Left lung (tissue), 14 donors: ENCODE measurements at regions of chr11 and their contacts with region 1.

Region 1: GRCh38 chr11:112280268-112281126 is 19.8 kb upstream of the PLET1 start:
- DNase-seq: peak in 3 of 4 donors; percentile 49 to 83 (median 70)
- ATAC-seq: peak; percentile 99
- H3K4me3 ChIP-seq: peak overlapping the region; percentile 45 to 48
- H3K27ac ChIP-seq: no peak overlapping the region
- H3K4me1 ChIP-seq: peaks cover 0 to 8% of the 10 kb centered on the region in 2 donors
- H3K27me3 ChIP-seq: no peaks in the 10 kb centered on the region
- CTCF ChIP-seq: peak; percentile 44 to 63

Region 2: GRCh38 chr11:112113539-112114457 is 166.7 kb before region 1 on chr11:
- intact Hi-C with region 1: loop called in 1 of 2 experiments (anchors 5 kb)
- DNase-seq: peak in 2 of 4 donors; percentile 22 to 54
- ATAC-seq: peak; percentile 94
- H3K4me3 ChIP-seq: no peak overlapping the region
- H3K27ac ChIP-seq: no peak overlapping the region
- H3K4me1 ChIP-seq: peaks cover 0 to 11% of the 10 kb centered on the region in 2 donors
- H3K27me3 ChIP-seq: no peaks in the 10 kb centered on the region
- CTCF ChIP-seq: peak; percentile 53 to 55

Region 3: DNA sequence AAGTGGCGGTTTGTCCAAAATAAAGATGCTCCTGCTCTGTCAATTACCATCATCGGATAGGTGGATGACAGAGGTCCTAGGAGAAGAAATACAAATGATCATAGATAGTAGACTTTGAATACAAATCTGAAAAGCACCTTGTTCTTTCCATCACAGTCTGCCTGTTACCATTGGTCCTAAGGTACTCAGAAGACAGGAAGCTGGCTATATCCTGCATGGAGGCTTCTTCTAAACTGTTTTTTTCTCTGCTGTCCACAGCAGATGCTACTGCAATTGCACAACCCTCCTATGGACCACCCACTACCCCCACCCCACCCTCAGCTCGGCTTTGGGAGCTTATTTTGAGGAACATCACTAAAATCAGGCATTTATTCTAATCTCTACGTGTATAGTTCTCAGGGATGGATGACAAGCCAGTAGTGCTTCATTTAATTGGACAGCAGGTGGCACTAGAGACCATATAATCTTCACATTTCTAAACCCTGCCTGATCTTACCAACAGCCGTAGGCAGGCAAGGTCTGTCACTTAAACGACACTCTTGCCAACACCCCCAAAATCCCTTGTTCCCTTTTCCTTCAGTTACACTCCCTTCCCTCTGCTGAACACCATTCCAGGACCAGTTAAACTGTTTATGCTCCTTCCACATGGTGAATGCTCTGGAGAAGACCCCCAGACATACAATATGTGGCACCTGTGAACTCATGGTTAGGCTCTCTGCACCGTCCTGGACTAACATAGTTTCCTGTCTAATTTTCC is 60.8 kb before region 1 on chr11:
- intact Hi-C with region 1: loop called (anchors 2 to 10 kb)
- DNase-seq: peak in 2 of 4 donors; percentile 75 to 84
- ATAC-seq: peak; percentile 98
- H3K4me3 ChIP-seq: no peak overlapping the region
- H3K27ac ChIP-seq: no peak overlapping the region
- H3K4me1 ChIP-seq: no peaks in the 10 kb centered on the region
- H3K27me3 ChIP-seq: no peaks in the 10 kb centered on the region
- CTCF ChIP-seq: peak; percentile 64 to 80

Region 4: DNA sequence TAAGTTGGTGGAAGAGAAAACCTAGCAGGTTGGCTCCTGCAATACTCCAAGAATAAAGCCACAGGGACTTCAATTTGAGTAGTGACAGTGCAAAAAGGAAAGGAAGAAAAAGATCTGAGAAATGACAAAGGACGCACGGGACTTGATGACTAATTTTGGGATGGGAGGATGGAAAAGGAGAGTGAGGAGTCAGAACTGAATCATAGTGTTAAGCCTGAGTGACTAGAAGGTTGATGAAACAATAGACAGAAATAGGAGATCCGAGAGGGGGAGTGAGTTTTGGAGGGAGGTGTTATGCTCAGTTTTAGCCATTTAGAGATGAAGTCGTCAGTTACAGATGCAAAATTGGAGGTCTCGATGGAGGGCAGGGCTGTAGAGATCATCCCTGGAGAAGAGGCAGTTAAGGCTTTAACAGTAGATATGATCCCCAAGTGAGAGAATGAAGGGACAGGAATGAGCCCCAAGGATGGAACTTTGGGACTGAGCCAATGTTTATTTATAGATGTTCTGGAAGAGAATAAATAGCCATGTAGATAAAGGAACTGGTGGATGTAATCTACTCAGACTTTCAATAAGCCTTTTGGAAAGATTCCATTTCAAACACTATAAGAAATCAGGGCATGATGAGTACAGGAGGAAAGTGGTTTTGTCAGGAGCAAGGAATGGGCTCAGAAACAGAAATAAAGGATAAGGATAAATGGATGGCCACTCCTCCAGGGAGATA is 571.8 kb after region 1 on chr11:
- intact Hi-C with region 1: no loop called
- DNase-seq: no peak
- ATAC-seq: no peak
- H3K4me3 ChIP-seq: no peak overlapping the region
- H3K27ac ChIP-seq: no peak overlapping the region
- H3K4me1 ChIP-seq: no peaks in the 10 kb centered on the region
- H3K27me3 ChIP-seq: no peaks in the 10 kb centered on the region
- CTCF ChIP-seq: no peak